IMR-90 (cell line): ENCODE measurements at regions of chr10 and their contacts with region 1.

Region 1: GRCh38 chr10:35103882-35104281 is 13.7 kb upstream of the CUL2 start:
- DNase-seq: no peak
- ATAC-seq: no peak
- H3K4me3 ChIP-seq: no peak overlapping the region
- H3K27ac ChIP-seq: no peak overlapping the region
- H3K4me1 ChIP-seq: no peaks in the 10 kb centered on the region
- H3K27me3 ChIP-seq: peaks cover 3% of the 10 kb centered on the region
- CTCF ChIP-seq: no peak
- POLR2A ChIP-seq: no peak
- RAD21 ChIP-seq: no peak

Region 2: GRCh38 chr10:35136263-35136815 is 32.5 kb after region 1 on chr10:
- CTCF ChIA-PET with region 1: no interaction called
- POLR2A ChIA-PET with region 1: no interaction called
- dilution Hi-C with region 1: no loop called
- in situ Hi-C with region 1: no loop called
- intact Hi-C with region 1: no loop called
- DNase-seq: no peak
- ATAC-seq: no peak
- H3K4me3 ChIP-seq: no peak overlapping the region
- H3K27ac ChIP-seq: no peak overlapping the region
- H3K4me1 ChIP-seq: peaks cover 4% of the 10 kb centered on the region
- H3K27me3 ChIP-seq: no peaks in the 10 kb centered on the region
- CTCF ChIP-seq: no peak
- POLR2A ChIP-seq: no peak
- RAD21 ChIP-seq: no peak

Region 3: GRCh38 chr10:35299016-35299415 is 195.1 kb after region 1 on chr10:
- CTCF ChIA-PET with region 1: no interaction called
- POLR2A ChIA-PET with region 1: no interaction called
- dilution Hi-C with region 1: no loop called
- in situ Hi-C with region 1: no loop called
- intact Hi-C with region 1: no loop called
- DNase-seq: no peak
- ATAC-seq: no peak
- H3K4me3 ChIP-seq: no peak overlapping the region
- H3K27ac ChIP-seq: no peak overlapping the region
- H3K4me1 ChIP-seq: peaks cover 2% of the 10 kb centered on the region; the same call in 1 of the 2 replicates
- H3K27me3 ChIP-seq: no peaks in the 10 kb centered on the region
- CTCF ChIP-seq: no peak
- POLR2A ChIP-seq: no peak
- RAD21 ChIP-seq: no peak

Region 4: GRCh38 chr10:35555962-35556930 is 452.4 kb after region 1 on chr10:
- CTCF ChIA-PET with region 1: no interaction called
- POLR2A ChIA-PET with region 1: interaction called, 10 read pairs
- dilution Hi-C with region 1: no loop called
- in situ Hi-C with region 1: loop called (anchors 25 kb)
- intact Hi-C with region 1: no loop called
- DNase-seq: no peak
- ATAC-seq: peak; percentile 65
- H3K4me3 ChIP-seq: no peak overlapping the region
- H3K27ac ChIP-seq: no peak overlapping the region
- H3K4me1 ChIP-seq: peaks cover 5% of the 10 kb centered on the region
- H3K27me3 ChIP-seq: no peaks in the 10 kb centered on the region
- CTCF ChIP-seq: no peak
- POLR2A ChIP-seq: no peak
- RAD21 ChIP-seq: no peak

Region 5: GRCh38 chr10:36888929-36889573 is 1785.2 kb after region 1 on chr10:
- CTCF ChIA-PET with region 1: no interaction called
- POLR2A ChIA-PET with region 1: no interaction called
- dilution Hi-C with region 1: no loop called
- in situ Hi-C with region 1: loop called (anchors 25 kb)
- intact Hi-C with region 1: no loop called
- DNase-seq: peak; percentile 3
- ATAC-seq: no peak; the same call in 1 of the 2 replicates
- H3K4me3 ChIP-seq: no peak overlapping the region
- H3K27ac ChIP-seq: no peak overlapping the region
- H3K4me1 ChIP-seq: no peaks in the 10 kb centered on the region
- H3K27me3 ChIP-seq: no peaks in the 10 kb centered on the region; the same call in 1 of the 2 replicates
- CTCF ChIP-seq: peak; percentile 21; the same call in 1 of the 2 replicates
- POLR2A ChIP-seq: no peak
- RAD21 ChIP-seq: peak; percentile 29